ENCODE measurements at regions of chr18 and their contacts with region 1.

Region 1: GRCh38 chr18:13039806-13040205 is 48.6 kb downstream of the CEP192 start:
- DNase-seq: no peak
- H3K4me3 ChIP-seq: no peak overlapping the region
- H3K27ac ChIP-seq: no peak overlapping the region
- H3K4me1 ChIP-seq: no peaks in the 10 kb centered on the region
- H3K27me3 ChIP-seq: no peaks in the 10 kb centered on the region
- CTCF ChIP-seq: no peak
- POLR2A ChIP-seq: no peak

Region 2: DNA sequence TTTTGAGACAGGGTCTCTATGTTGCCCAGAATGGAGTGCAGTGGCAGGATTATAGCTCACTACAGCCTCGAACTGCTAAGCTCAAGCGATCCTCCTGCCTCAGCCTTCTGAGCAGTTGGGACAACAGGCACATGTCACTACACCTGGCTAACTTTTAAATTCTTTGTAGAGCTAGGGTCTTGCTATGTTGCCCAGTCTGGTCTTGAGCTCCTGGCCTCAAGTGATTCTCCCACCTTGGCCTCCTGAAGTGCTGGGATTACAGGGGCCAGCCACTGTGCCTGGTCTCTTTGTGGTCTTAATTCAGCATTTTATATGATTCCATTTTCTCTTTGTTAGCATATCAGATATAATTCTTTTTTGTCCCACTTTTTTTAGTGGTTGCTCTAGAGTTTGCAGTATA is 14.6 kb before region 1 on chr18:
- CTCF ChIA-PET with region 1: no interaction called
- POLR2A ChIA-PET with region 1: no interaction called
- dilution Hi-C with region 1: no loop called
- intact Hi-C with region 1: loop called (anchors 1 kb)
- DNase-seq: no peak
- H3K4me3 ChIP-seq: no peak overlapping the region
- H3K27ac ChIP-seq: no peak overlapping the region
- H3K4me1 ChIP-seq: peaks cover 2% of the 10 kb centered on the region
- H3K27me3 ChIP-seq: no peaks in the 10 kb centered on the region
- CTCF ChIP-seq: no peak
- POLR2A ChIP-seq: no peak

Region 3: DNA sequence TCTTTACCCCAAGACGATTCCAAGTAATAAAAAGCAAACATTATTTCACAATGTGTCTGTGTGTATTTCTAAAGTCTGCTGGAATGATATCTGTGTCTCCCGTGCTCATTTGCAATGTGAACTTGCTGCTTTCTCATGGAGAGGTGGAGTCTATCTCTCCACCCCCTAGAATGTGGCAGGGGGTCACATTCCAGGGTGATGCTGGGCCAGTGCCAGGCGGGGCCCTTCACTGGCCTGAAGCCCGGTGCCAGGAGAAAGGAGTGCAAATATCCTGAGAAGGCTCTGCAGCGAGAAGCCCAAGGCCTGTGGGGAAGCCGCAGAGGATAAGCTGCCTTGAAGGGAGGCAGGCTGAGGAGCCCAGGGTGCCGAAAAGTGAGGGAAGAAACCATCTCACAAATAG is 152.0 kb after region 1 on chr18:
- CTCF ChIA-PET with region 1: no interaction called
- POLR2A ChIA-PET with region 1: no interaction called
- dilution Hi-C with region 1: no loop called
- intact Hi-C with region 1: no loop called
- DNase-seq: peak; percentile 4
- H3K4me3 ChIP-seq: no peak overlapping the region
- H3K27ac ChIP-seq: no peak overlapping the region
- H3K4me1 ChIP-seq: no peaks in the 10 kb centered on the region
- H3K27me3 ChIP-seq: peaks cover 0 to 2% of the 10 kb centered on the region in 2 experiments
- CTCF ChIP-seq: no peak
- POLR2A ChIP-seq: no peak